Adrenal gland (tissue), 19 donors: ENCODE measurements at regions of chr11 and their contacts with region 1.

Region 1: GRCh38 chr11:76674517-76675400 is 4.2 kb upstream of the LRRC32 start:
- DNase-seq: peak in 3 of 7 donors; percentile 34 to 75 (median 65)
- H3K4me3 ChIP-seq: no peak overlapping the region
- H3K27ac ChIP-seq: peak overlapping the region in 1 of 5 donors; percentile 57
- H3K4me1 ChIP-seq: peaks cover 0 to 45% of the 10 kb centered on the region in 2 donors
- H3K27me3 ChIP-seq: peaks cover 4% of the 10 kb centered on the region
- CTCF ChIP-seq: no peak
- POLR2A ChIP-seq: no peak

Region 2: DNA sequence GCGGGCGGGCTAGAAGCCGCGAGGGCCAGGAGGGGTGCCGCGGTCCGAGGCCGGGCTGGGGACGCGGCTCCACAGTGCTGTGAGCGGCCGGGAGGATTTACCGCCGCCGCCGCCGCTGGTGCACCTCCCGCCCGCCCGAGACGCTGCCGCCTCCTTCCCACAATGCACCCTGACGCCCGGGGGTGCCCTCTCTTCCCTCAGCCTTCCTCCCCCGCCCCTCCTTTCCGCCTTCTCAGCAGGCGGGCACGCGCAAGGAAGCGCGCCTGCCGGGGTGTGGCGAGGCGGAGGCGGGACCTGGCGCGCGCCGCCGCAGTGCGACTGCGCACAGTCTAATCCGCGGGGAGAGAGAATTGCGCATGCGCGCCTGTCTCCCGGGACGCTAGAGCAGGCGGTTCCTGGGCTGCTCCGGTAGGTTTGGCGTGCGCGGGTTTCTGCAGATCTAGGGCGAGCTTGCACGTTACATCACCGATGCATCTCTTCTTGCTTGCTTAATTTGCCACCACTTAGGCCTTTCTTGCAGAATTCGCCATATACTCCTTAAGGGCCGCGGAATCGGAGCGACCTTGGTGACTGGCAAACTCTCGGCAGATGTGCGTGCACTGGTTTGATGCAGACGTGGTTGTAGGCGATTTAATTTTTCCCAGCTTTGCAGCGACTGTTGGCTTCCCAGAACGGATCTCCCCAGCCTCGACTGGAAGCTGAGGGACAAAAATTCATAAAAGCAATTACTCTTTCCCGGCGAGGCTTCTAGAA is 293.6 kb before region 1 on chr11 and contains the starts of genes GVQW3 and THAP12:
- intact Hi-C with region 1: no loop called
- DNase-seq: peak; percentile 97 to 99 (median 98)
- H3K4me3 ChIP-seq: peak within 1 kb of the TSS; percentile 17 to 98 (median 52)
- H3K27ac ChIP-seq: peak within 1 kb of the TSS in 4 of 5 donors; percentile 67 to 95 (median 83)
- H3K4me1 ChIP-seq: peaks cover 12 to 26% of the 10 kb centered on the region in 2 donors
- H3K27me3 ChIP-seq: no peaks in the 10 kb centered on the region
- CTCF ChIP-seq: no peak
- POLR2A ChIP-seq: peak; percentile 62 to 95
- total RNA-seq, gene GVQW3: 0.54 to 10.9 (median 2.5) TPM
- total RNA-seq, gene THAP12: 24.8 to 64.2 (median 43.5) TPM

Region 3: GRCh38 chr11:76501526-76502210 is 173.1 kb before region 1 on chr11:
- intact Hi-C with region 1: no loop called
- DNase-seq: no peak
- H3K4me3 ChIP-seq: no peak overlapping the region
- H3K27ac ChIP-seq: no peak overlapping the region
- H3K4me1 ChIP-seq: no peaks in the 10 kb centered on the region
- H3K27me3 ChIP-seq: no peaks in the 10 kb centered on the region
- CTCF ChIP-seq: no peak
- POLR2A ChIP-seq: no peak

Region 4: GRCh38 chr11:76598426-76598839 is 76.3 kb before region 1 on chr11:
- intact Hi-C with region 1: loop called in 1 of 2 experiments (anchors 5 kb)
- DNase-seq: peak in 6 of 7 donors; percentile 52 to 66 (median 63)
- H3K4me3 ChIP-seq: no peak overlapping the region
- H3K27ac ChIP-seq: no peak overlapping the region
- H3K4me1 ChIP-seq: peaks cover 7 to 13% of the 10 kb centered on the region in 2 donors
- H3K27me3 ChIP-seq: no peaks in the 10 kb centered on the region
- CTCF ChIP-seq: peak in 5 of 6 experiments; percentile 39 to 51 (median 47)
- POLR2A ChIP-seq: no peak